ENCODE measurements at regions of chr5 and their contacts with region 1.

Region 1: GRCh38 chr5:71601222-71602041 is 14.3 kb downstream of the MCCC2 start:
- DNase-seq: peak; percentile 68
- H3K4me3 Mint-ChIP-seq: peak overlapping the region; percentile 13
- H3K27ac Mint-ChIP-seq: peak overlapping the region; percentile 92
- H3K4me1 Mint-ChIP-seq: peaks cover 38% of the 10 kb centered on the region
- H3K27me3 Mint-ChIP-seq: no peaks in the 10 kb centered on the region

Region 2: GRCh38 chr5:71455427-71456361 is 145.7 kb before region 1 on chr5 and contains the start of gene BDP1:
- intact Hi-C with region 1: loop called (anchors 1 kb)
- DNase-seq: peak; percentile 94
- H3K4me3 Mint-ChIP-seq: peak within 1 kb of the TSS; percentile 98
- H3K27ac Mint-ChIP-seq: peak within 1 kb of the TSS; percentile 100
- H3K4me1 Mint-ChIP-seq: peaks cover 30% of the 10 kb centered on the region
- H3K27me3 Mint-ChIP-seq: peaks cover under 1% of the 10 kb centered on the region
- total RNA-seq, gene BDP1: 41.2 and 41.5 TPM in 2 replicates

Region 3: DNA sequence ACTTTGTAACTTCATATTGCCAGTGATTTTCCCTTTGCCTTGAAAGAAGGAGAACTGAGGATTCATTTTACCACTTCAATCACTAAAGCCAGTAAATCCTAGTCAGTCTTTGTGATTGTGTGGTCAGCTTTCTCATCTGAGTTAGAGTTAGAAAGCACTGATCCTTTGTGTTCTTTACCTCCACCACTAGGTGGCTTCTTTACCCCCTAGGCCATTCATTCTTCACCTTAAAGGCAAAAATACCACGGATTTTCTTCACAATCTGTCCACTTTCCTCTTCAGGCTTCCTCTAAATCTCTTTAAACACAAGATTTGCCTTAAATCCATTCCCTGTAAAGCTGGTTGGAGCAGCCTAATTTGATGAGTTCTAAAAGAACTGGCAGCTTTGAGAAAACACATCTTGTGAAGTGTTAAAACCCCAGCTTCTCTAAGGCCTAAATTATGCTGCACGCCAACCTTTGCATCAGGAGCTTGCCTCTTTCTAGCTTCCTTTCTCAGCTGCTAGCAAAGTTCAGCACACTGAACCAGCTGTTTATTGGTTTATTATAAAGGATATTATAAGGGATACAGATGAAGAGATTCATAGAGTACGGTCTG is 125.5 kb before region 1 on chr5:
- intact Hi-C with region 1: loop called (anchors 1 kb)
- DNase-seq: no peak
- H3K4me3 Mint-ChIP-seq: no peak overlapping the region
- H3K27ac Mint-ChIP-seq: no peak overlapping the region
- H3K4me1 Mint-ChIP-seq: no peaks in the 10 kb centered on the region
- H3K27me3 Mint-ChIP-seq: no peaks in the 10 kb centered on the region

Region 4: DNA sequence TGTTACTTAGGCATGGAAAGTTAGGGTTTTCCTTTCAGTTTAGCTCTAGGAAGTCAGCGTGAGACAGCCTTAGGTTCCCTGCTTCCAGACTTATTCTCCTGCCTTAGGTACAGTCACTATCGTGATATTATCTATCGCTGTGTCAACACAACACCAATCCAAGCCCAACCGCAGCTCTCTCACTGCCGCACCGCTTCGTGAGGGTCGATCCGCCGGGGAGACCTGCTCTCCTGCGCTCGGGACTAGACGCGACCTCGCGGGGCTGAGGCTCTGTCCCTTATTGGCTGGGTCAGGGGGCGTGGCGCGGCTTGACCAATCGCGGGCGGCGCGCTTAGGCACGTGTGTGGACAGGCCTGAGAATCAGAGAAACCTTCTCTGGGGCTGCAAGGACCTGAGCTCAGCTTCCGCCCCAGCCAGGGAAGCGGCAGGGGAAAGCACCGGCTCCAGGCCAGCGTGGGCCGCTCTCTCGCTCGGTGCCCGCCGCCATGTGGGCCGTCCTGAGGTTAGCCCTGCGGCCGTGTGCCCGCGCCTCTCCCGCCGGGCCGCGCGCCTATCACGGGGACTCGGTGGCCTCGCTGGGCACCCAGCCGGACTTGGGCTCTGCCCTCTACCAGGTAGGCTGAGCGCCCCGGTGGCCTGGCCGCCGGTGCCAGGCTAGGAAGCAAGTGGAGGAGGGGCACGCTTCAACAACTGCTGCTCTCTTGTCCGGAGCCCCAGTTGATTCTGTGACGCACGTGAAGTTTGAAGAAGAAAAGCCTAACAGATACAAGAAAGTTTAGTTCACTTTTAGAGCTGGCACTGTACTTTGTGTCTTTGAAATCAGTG is 14.3 kb before region 1 on chr5 and contains the start of gene MCCC2:
- intact Hi-C with region 1: loop called (anchors 1 kb)
- DNase-seq: peak; percentile 96
- H3K4me3 Mint-ChIP-seq: peak within 1 kb of the TSS; percentile 95
- H3K27ac Mint-ChIP-seq: peak within 1 kb of the TSS; percentile 99
- H3K4me1 Mint-ChIP-seq: peaks cover 36% of the 10 kb centered on the region
- H3K27me3 Mint-ChIP-seq: no peaks in the 10 kb centered on the region
- total RNA-seq, gene MCCC2: 49.8 and 53.8 TPM in 2 replicates

Region 5: GRCh38 chr5:71651579-71651978 is 50.1 kb after region 1 on chr5:
- intact Hi-C with region 1: loop called (anchors 1 kb)
- DNase-seq: no peak
- H3K4me3 Mint-ChIP-seq: no peak overlapping the region
- H3K27ac Mint-ChIP-seq: no peak overlapping the region
- H3K4me1 Mint-ChIP-seq: peaks cover 18% of the 10 kb centered on the region
- H3K27me3 Mint-ChIP-seq: no peaks in the 10 kb centered on the region

Region 6: DNA sequence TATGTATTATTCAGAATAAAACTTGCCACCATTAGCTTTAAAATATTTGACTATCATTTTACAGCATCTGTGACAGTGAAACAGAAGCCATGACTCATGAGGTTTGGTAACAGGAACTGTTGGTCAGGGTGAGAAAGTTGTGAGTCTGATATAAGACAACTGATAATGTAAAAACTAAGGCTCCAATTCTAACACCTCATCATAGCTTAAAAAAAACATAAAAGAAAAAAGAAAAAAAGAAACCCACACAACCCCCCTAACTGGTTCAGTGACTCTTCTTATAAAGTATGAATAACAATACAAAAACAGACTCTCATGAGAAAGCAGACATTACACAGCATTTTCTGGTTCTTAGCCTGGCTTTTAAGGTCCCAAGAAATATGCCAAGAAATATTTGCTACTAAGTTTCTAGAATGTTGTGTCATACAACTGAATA is 632.9 kb after region 1 on chr5:
- intact Hi-C with region 1: loop called (anchors 2 kb)
- DNase-seq: peak; percentile 12
- H3K4me3 Mint-ChIP-seq: peak overlapping the region; percentile 32
- H3K27ac Mint-ChIP-seq: no peak overlapping the region
- H3K4me1 Mint-ChIP-seq: peaks cover 29% of the 10 kb centered on the region
- H3K27me3 Mint-ChIP-seq: peaks cover 15% of the 10 kb centered on the region